ENCODE measurements at regions of chr3 and their contacts with region 1.

Region 1: GRCh38 chr3:102089904-102090492 is 240.7 kb downstream of the NFKBIZ start:
- DNase-seq: no peak
- H3K4me3 Mint-ChIP-seq: no peak overlapping the region
- H3K27ac Mint-ChIP-seq: no peak overlapping the region
- H3K4me1 Mint-ChIP-seq: peaks cover 59% of the 10 kb centered on the region
- H3K27me3 Mint-ChIP-seq: peaks cover 1% of the 10 kb centered on the region

Region 2: GRCh38 chr3:101809178-101810021 is 280.6 kb before region 1 on chr3:
- intact Hi-C with region 1: loop called (anchors 2 kb)
- DNase-seq: no peak
- H3K4me3 Mint-ChIP-seq: no peak overlapping the region
- H3K27ac Mint-ChIP-seq: peak overlapping the region; percentile 27
- H3K4me1 Mint-ChIP-seq: peaks cover 55% of the 10 kb centered on the region
- H3K27me3 Mint-ChIP-seq: no peaks in the 10 kb centered on the region

Region 3: GRCh38 chr3:101936419-101937356 is 153.3 kb before region 1 on chr3:
- intact Hi-C with region 1: loop called (anchors 1 kb)
- DNase-seq: peak; percentile 33
- H3K4me3 Mint-ChIP-seq: peak overlapping the region; percentile 65
- H3K27ac Mint-ChIP-seq: peak overlapping the region; percentile 77
- H3K4me1 Mint-ChIP-seq: peaks cover 33% of the 10 kb centered on the region
- H3K27me3 Mint-ChIP-seq: peaks cover 12% of the 10 kb centered on the region

Region 4: DNA sequence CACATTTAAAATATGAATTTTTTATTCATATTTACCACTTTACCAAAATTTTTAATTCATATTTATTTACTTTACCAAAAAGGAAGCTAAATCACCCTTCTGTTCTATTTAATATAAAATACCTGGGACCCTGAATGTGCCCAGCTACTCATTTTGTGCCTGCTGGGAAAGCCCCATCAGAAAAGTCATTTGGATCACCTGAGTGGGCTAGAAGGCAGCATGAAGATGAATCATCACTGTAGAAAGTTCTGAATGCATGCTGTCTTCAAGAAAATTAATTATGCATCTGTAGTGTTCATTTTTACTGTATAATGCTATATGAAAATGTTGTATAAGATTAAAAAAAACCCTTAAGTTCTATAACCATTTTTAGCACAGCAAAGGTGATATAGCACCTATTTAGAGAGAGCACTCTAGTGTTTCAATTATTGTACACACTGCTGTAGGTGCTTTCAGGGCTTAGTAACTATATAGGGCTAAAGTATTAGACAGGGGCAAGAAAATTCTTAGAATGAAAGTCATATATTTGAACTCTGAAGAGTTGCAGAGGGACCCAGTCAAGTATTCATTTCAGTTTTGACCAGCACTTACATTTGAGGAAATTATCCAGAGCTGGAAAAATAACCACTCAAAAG is 65.6 kb before region 1 on chr3:
- intact Hi-C with region 1: loop called (anchors 1 kb)
- DNase-seq: no peak
- H3K4me3 Mint-ChIP-seq: no peak overlapping the region
- H3K27ac Mint-ChIP-seq: no peak overlapping the region
- H3K4me1 Mint-ChIP-seq: peaks cover 9% of the 10 kb centered on the region
- H3K27me3 Mint-ChIP-seq: peaks cover 2% of the 10 kb centered on the region

Region 5: GRCh38 chr3:102069211-102069662 is 20.8 kb before region 1 on chr3:
- intact Hi-C with region 1: loop called (anchors 2 kb)
- DNase-seq: no peak
- H3K4me3 Mint-ChIP-seq: no peak overlapping the region
- H3K27ac Mint-ChIP-seq: no peak overlapping the region
- H3K4me1 Mint-ChIP-seq: peaks cover 16% of the 10 kb centered on the region
- H3K27me3 Mint-ChIP-seq: no peaks in the 10 kb centered on the region

Region 6: GRCh38 chr3:102113411-102114041 is 23.5 kb after region 1 on chr3:
- intact Hi-C with region 1: loop called (anchors 1 kb)
- DNase-seq: no peak
- H3K4me3 Mint-ChIP-seq: peak overlapping the region; percentile 4
- H3K27ac Mint-ChIP-seq: peak overlapping the region; percentile 67
- H3K4me1 Mint-ChIP-seq: peaks cover 41% of the 10 kb centered on the region
- H3K27me3 Mint-ChIP-seq: no peaks in the 10 kb centered on the region

Region 7: GRCh38 chr3:102229062-102229655 is 139.2 kb after region 1 on chr3:
- intact Hi-C with region 1: loop called (anchors 2 kb)
- DNase-seq: peak; percentile 62
- H3K4me3 Mint-ChIP-seq: no peak overlapping the region
- H3K27ac Mint-ChIP-seq: no peak overlapping the region
- H3K4me1 Mint-ChIP-seq: peaks cover 20% of the 10 kb centered on the region
- H3K27me3 Mint-ChIP-seq: peaks cover 16% of the 10 kb centered on the region

Measured in activated T-helper 1 cell treated with anti-CD3 and anti-CD28 coated beads, Interleukin-12 subunit alpha, Interleukin-12 subunit beta, Interleukin-2, Interleukin-4 antibody, amounts not matched to agents 30 ng/mL and 10 ng/mL and 1 ng/mL, durations not matched to agents 14 hours and 24 hours and 36 hours (primary cell).